ENCODE measurements at regions of chr3 and their contacts with region 1.

Region 1: GRCh38 chr3:196317687-196318467 is at the start of gene DYNLT2B:
- DNase-seq: peak; percentile 87
- H3K4me3 Mint-ChIP-seq: peak within 1 kb of the TSS; percentile 94
- H3K27ac Mint-ChIP-seq: peak within 1 kb of the TSS; percentile 95
- H3K4me1 Mint-ChIP-seq: no peaks in the 10 kb centered on the region
- H3K27me3 Mint-ChIP-seq: no peaks in the 10 kb centered on the region
- CTCF ChIP-seq: no peak
- total RNA-seq, gene DYNLT2B: 22.3 and 23.5 TPM in 2 replicates

Region 2: GRCh38 chr3:196287440-196288148 is 30.3 kb before region 1 on chr3 and contains the start of gene PCYT1A:
- CTCF ChIA-PET with region 1: no interaction called
- POLR2A ChIA-PET with region 1: interaction called, 11 read pairs
- intact Hi-C with region 1: no loop called
- DNase-seq: peak; percentile 96
- H3K4me3 Mint-ChIP-seq: peak within 1 kb of the TSS; percentile 100
- H3K27ac Mint-ChIP-seq: peak within 1 kb of the TSS; percentile 99
- H3K4me1 Mint-ChIP-seq: peaks cover 26% of the 10 kb centered on the region
- H3K27me3 Mint-ChIP-seq: no peaks in the 10 kb centered on the region
- CTCF ChIP-seq: no peak
- total RNA-seq, gene PCYT1A: 64.5 and 78.1 TPM in 2 replicates

Region 3: DNA sequence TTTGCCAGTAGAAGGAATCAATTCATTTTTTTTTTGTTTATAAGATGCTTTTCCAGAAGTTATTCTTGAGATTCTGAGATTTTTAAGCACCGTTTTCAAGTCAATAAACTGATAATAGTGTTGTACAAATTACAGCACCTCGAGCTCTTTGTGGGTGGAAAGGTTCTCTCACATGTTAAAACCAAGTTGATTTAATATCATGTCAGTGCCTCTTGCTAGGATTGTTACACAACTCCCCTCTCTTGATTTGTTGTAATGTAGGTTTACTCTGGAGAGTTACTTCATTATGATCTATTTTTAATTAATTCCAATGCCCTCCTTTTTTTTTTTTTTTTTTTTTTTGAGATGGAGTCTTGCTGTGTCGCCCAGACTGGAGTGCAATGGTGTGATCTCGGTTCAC is 140.2 kb after region 1 on chr3:
- CTCF ChIA-PET with region 1: no interaction called
- POLR2A ChIA-PET with region 1: no interaction called
- intact Hi-C with region 1: no loop called
- DNase-seq: no peak
- H3K4me3 Mint-ChIP-seq: no peak overlapping the region
- H3K27ac Mint-ChIP-seq: no peak overlapping the region
- H3K4me1 Mint-ChIP-seq: no peaks in the 10 kb centered on the region
- H3K27me3 Mint-ChIP-seq: no peaks in the 10 kb centered on the region
- CTCF ChIP-seq: no peak

Measured in MCF 10A (cell line).